Left ventricle myocardium inferior (tissue), 1 donor: ENCODE measurements at regions of chr10 and their contacts with region 1.

Region 1: DNA sequence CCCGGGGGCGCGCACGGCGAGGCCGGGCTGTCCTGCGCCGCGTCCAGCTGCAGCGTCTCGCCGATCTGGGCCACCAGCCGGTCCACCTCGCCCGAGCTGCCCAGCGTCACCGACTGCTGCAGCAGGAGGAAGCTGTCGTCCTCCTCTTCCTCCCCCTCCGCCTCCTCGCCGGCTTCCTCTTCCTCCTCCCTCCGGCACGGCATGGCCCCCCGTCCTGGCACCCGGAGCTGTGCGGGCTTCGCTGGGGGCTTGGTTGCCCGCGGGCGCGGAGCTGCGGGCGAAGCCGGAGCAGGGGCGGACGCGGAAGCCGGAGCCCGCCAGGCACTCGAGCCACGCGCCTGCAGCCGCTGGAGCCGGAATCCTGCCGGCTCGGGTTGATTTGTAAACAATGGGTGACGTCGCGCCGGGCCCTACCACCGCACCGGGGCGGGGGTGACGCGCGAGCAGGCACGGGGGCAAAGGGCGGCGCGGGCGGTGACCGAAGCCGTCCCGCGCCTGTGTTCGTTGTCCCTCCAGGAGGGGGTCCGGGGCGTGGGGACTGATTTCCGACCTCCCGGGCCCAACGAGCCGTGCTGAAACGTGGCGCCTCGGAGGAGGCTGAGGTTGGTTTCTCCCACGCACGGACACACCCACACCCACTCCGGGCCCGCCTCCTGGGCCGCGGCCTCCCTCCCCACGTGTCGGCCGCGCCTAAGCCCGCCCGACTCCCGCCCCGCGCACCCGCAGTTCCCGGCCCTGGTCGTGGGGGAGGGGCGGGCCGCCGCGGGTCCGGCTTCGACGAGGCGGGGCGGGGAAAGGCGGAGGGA is at the start of gene FRAT2:
- DNase-seq: peak; percentile 93
- H3K4me3 ChIP-seq: peak within 1 kb of the TSS; percentile 88
- H3K27ac ChIP-seq: peak within 1 kb of the TSS; percentile 97
- H3K4me1 ChIP-seq: peaks cover 81% of the 10 kb centered on the region
- H3K27me3 ChIP-seq: no peaks in the 10 kb centered on the region
- CTCF ChIP-seq: no peak
- total RNA-seq, gene FRAT2: 5.9 TPM

Region 2: DNA sequence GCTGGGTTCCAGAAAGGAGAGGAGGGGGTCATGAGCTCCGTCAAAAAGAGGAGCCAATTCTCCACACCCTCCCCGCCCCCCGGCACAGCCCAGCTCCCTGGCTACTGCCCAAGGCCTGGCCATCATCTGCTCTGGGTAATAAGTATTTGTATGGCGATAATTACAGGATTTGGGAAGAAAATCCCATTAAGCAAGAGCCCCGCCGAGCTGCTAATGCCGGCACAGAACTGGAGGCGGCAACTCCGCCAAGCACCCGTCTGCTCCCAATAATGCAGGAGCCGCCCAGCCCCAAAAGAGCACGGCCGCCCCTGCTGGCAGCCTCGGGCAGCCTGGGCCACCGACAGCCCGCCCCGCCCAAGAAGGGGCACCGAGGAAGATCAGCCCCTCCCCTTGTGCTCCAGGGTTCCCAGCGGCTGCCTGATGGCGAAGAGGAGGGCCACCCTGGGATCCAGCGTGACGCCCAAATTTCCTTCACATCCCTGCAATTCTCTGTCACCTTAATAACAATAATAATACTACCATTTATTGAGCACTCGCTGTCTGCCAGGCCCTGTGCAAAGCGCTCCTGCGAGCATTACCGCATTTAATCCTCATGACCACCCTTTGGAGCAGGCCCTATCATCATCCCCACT is 154.7 kb before region 1 on chr10:
- intact Hi-C with region 1: no loop called
- DNase-seq: no peak
- H3K4me3 ChIP-seq: no peak overlapping the region
- H3K27ac ChIP-seq: no peak overlapping the region
- H3K4me1 ChIP-seq: no peaks in the 10 kb centered on the region
- H3K27me3 ChIP-seq: peaks cover 94% of the 10 kb centered on the region
- CTCF ChIP-seq: peak; percentile 41

Region 3: DNA sequence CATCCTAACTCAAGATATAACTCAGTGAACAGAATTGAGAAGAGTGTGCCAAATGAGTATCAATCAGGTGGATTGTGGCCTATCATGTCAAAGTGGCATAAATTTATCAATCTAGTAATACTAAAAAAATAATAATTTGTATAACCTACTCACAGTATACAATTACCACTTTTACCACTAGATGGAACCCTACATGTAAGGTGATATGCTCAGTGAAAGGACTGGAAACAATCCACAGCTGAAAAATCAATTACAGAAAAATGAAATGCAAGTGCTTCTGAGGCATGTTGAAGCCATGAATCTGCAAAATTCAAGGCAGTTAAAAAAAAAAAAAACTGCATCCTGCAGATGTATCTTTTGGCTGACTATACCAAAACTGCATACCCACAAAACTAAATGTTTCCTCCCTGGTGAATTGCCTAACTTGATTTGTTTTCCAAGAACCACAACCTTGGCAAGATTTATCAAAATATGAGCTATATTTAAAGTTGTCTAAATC is 56.0 kb before region 1 on chr10:
- intact Hi-C with region 1: loop called (anchors 5 kb)
- DNase-seq: no peak
- H3K4me3 ChIP-seq: no peak overlapping the region
- H3K27ac ChIP-seq: peak overlapping the region; percentile 52
- H3K4me1 ChIP-seq: peaks cover 26% of the 10 kb centered on the region
- H3K27me3 ChIP-seq: no peaks in the 10 kb centered on the region
- CTCF ChIP-seq: peak; percentile 79

Region 4: GRCh38 chr10:97584060-97584797 is 249.7 kb after region 1 on chr10 and contains the start of gene HOGA1:
- intact Hi-C with region 1: no loop called
- DNase-seq: peak; percentile 86
- H3K4me3 ChIP-seq: peak within 1 kb of the TSS; percentile 47
- H3K27ac ChIP-seq: peak within 1 kb of the TSS; percentile 94
- H3K4me1 ChIP-seq: peaks cover 41% of the 10 kb centered on the region
- H3K27me3 ChIP-seq: no peaks in the 10 kb centered on the region
- CTCF ChIP-seq: no peak
- total RNA-seq, gene HOGA1: 47.1 TPM